CD4-positive, alpha-beta memory T cell (primary cell): ENCODE measurements at regions of chr17 and their contacts with region 1.

Region 1: DNA sequence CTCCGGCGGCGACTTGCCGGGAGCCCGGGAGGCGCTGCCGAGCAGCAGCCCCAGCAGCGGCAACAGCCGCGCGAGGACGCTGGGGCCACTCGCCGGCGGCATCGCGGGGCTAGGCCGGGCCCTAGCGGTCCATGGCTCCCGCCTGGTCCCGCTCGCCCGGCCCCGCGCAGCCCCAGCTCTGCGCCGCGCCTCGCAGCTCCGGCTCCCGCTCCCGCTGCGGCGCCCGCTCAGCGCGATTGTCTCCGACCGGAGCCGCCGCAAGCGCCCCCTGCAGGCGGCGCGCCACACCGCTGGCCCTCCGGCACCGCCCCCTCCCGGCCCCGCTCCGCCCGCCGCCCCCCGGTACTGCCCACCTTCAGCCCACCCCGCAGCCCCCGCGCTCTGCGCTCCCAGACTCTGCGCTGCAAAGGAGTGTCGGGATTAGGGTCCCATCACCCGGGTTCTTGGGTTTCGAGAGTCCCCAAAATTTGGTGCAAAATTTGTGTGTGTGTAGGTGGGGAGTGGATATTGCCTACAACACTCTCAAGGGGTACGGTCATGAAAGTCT is at the start of gene FAM171A2:
- DNase-seq: peak in 4 of 5 donors; percentile 67 to 70 (median 69)
- H3K4me3 ChIP-seq: peak within 1 kb of the TSS; percentile 17 to 32
- H3K4me3 Mint-ChIP-seq: peak within 1 kb of the TSS; percentile 78 to 91 (median 82)
- H3K27ac ChIP-seq: no peak within 1 kb of the TSS
- H3K27ac Mint-ChIP-seq: peak within 1 kb of the TSS in 1 of 7 donors; percentile 79
- H3K4me1 ChIP-seq: no peaks in the 10 kb centered on the region
- H3K4me1 Mint-ChIP-seq: peaks cover 0 to 8% (median 3%) of the 10 kb centered on the region in 4 donors
- H3K27me3 ChIP-seq: peaks cover 3% of the 10 kb centered on the region
- H3K27me3 Mint-ChIP-seq: peaks cover 12 to 24% of the 10 kb centered on the region in 2 donors
- total RNA-seq, gene FAM171A2: 0.52 to 0.72 TPM

Region 2: DNA sequence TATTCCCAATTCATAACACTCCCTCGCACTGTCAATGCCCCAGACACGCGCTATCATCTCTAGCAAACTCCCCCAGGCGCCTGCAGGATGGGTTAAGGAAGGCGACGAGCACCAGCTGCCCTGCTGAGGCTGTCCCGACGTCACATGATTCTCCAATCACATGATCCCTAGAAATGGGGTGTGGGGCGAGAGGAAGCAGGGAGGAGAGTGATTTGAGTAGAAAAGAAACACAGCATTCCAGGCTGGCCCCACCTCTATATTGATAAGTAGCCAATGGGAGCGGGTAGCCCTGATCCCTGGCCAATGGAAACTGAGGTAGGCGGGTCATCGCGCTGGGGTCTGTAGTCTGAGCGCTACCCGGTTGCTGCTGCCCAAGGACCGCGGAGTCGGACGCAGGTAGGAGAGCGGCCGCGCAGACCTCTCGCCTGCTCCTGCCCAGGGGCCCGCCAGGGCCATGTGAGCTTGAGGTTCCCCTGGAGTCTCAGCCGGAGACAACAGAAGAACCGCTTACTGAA is 18.7 kb before region 1 on chr17 and contains the start of gene GRN:
- CTCF ChIA-PET with region 1: interaction called, 10 read pairs
- POLR2A ChIA-PET with region 1: interaction called, 4 read pairs
- intact Hi-C with region 1: no loop called
- DNase-seq: peak; percentile 81 to 87 (median 84)
- H3K4me3 ChIP-seq: peak within 1 kb of the TSS; percentile 90 to 97
- H3K4me3 Mint-ChIP-seq: peak within 1 kb of the TSS; percentile 90 to 97 (median 92)
- H3K27ac ChIP-seq: peak within 1 kb of the TSS; percentile 57
- H3K27ac Mint-ChIP-seq: peak within 1 kb of the TSS; percentile 69 to 88 (median 82)
- H3K4me1 ChIP-seq: peaks cover 10% of the 10 kb centered on the region
- H3K4me1 Mint-ChIP-seq: peaks cover 10 to 31% (median 19%) of the 10 kb centered on the region in 4 donors
- H3K27me3 ChIP-seq: no peaks in the 10 kb centered on the region
- H3K27me3 Mint-ChIP-seq: peaks cover 0 to 6% of the 10 kb centered on the region in 2 donors
- total RNA-seq, gene GRN: 49.5 to 50.0 TPM

Region 3: DNA sequence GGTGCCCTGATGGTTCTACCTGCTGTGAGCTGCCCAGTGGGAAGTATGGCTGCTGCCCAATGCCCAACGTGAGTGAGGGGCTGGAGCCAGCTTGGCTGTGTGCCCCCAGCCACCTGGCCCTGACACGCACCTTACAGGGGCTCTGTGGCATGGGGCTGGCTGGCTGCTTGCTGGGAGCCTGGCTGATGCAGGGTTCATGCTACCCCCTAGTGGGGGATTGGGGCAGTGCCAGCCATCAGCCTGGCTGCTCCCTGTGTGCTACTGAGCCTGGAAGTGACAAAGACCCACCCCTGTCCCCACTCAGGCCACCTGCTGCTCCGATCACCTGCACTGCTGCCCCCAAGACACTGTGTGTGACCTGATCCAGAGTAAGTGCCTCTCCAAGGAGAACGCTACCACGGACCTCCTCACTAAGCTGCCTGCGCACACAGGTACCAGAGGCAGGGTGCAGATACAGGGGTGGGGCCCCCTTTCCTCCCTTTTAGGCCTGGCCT is 12.9 kb before region 1 on chr17:
- CTCF ChIA-PET with region 1: interaction called, 26 read pairs
- POLR2A ChIA-PET with region 1: interaction called, 11 read pairs
- intact Hi-C with region 1: no loop called
- DNase-seq: peak in 4 of 5 donors; percentile 63 to 70 (median 64)
- H3K4me3 ChIP-seq: no peak overlapping the region
- H3K4me3 Mint-ChIP-seq: peak overlapping the region in 1 of 8 donors; percentile 46
- H3K27ac ChIP-seq: no peak overlapping the region
- H3K27ac Mint-ChIP-seq: peak overlapping the region in 1 of 7 donors; percentile 51
- H3K4me1 ChIP-seq: peaks cover 7% of the 10 kb centered on the region
- H3K4me1 Mint-ChIP-seq: peaks cover 9 to 19% (median 13%) of the 10 kb centered on the region in 4 donors
- H3K27me3 ChIP-seq: no peaks in the 10 kb centered on the region
- H3K27me3 Mint-ChIP-seq: no peaks in the 10 kb centered on the region

Region 4: DNA sequence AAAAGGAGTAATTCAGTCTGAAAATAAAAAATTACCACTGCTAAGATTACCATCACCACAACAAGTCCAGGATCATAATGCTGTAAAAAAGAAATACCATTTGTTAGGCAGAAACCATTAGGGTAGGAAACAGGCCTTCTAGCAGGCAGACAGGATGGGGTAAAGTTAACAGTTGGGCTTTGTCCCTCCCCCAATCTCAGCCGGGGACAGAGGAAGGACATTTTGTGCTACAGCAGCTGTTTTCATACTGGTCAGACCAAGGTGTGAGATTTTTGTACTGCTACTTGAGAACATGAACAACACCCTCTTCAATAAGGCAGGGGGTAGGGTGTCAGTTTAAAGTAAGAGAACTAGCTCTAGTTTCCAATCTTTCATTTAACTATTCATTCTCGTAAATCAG is 75.0 kb after region 1 on chr17:
- CTCF ChIA-PET with region 1: no interaction called
- POLR2A ChIA-PET with region 1: no interaction called
- intact Hi-C with region 1: no loop called
- DNase-seq: no peak
- H3K4me3 ChIP-seq: no peak overlapping the region
- H3K4me3 Mint-ChIP-seq: peak overlapping the region in 1 of 8 donors; percentile 18
- H3K27ac ChIP-seq: no peak overlapping the region
- H3K27ac Mint-ChIP-seq: peak overlapping the region in 6 of 7 donors; percentile 0 to 79 (median 22)
- H3K4me1 ChIP-seq: peaks cover 12% of the 10 kb centered on the region
- H3K4me1 Mint-ChIP-seq: peaks cover 14 to 26% (median 21%) of the 10 kb centered on the region in 4 donors
- H3K27me3 ChIP-seq: no peaks in the 10 kb centered on the region
- H3K27me3 Mint-ChIP-seq: no peaks in the 10 kb centered on the region

Region 5: DNA sequence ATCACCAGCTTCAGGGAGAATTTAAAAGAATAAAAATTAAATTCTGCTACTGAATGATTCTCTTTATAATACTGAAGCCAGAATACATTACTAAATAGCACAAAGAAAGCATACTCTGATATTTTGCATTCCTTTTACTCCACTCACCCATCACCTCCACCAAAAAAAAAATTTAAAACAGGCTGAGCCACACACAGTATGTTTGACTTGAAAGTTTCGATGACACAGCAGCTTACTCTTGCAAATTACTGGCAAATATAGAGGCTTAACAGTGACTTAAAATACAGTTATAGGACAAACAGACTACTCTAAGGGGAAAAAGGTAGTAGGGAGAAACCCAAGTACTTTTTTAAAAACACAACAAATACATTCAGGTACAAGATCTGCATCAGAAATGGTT is 100.4 kb after region 1 on chr17:
- CTCF ChIA-PET with region 1: no interaction called
- POLR2A ChIA-PET with region 1: no interaction called
- intact Hi-C with region 1: no loop called
- DNase-seq: no peak
- H3K4me3 ChIP-seq: no peak overlapping the region
- H3K4me3 Mint-ChIP-seq: no peak overlapping the region
- H3K27ac ChIP-seq: no peak overlapping the region
- H3K27ac Mint-ChIP-seq: peak overlapping the region in 2 of 7 donors; percentile 20 to 39
- H3K4me1 ChIP-seq: peaks cover 19% of the 10 kb centered on the region
- H3K4me1 Mint-ChIP-seq: peaks cover 21 to 36% (median 28%) of the 10 kb centered on the region in 4 donors
- H3K27me3 ChIP-seq: no peaks in the 10 kb centered on the region
- H3K27me3 Mint-ChIP-seq: no peaks in the 10 kb centered on the region